Motor neuron (in vitro differentiated cells): ENCODE measurements at regions of chr5 and their contacts with region 1.

Region 1: GRCh38 chr5:154467655-154468354 is 10.2 kb downstream of the HAND1 start:
- ATAC-seq: peak; percentile 93 to 100 (median 98)
- H3K4me3 ChIP-seq: no peak overlapping the region
- H3K27ac ChIP-seq: no peak overlapping the region
- H3K4me1 ChIP-seq: no peaks in the 10 kb centered on the region

Region 2: GRCh38 chr5:154603978-154604679 is 136.3 kb after region 1 on chr5:
- in situ Hi-C with region 1: loop called in 6 of 9 experiments (anchors 5 to 25 kb)
- ATAC-seq: peak; percentile 47 to 69 (median 61)
- H3K4me3 ChIP-seq: no peak overlapping the region
- H3K27ac ChIP-seq: no peak overlapping the region
- H3K4me1 ChIP-seq: no peaks in the 10 kb centered on the region

Region 3: GRCh38 chr5:154610321-154611154 is 142.7 kb after region 1 on chr5:
- in situ Hi-C with region 1: loop called in 5 of 9 experiments (anchors 10 to 25 kb)
- ATAC-seq: peak; percentile 91 to 97 (median 96)
- H3K4me3 ChIP-seq: peak overlapping the region in 3 of 5 donors; percentile 2 to 25 (median 20)
- H3K27ac ChIP-seq: no peak overlapping the region
- H3K4me1 ChIP-seq: peaks cover 0 to 9% of the 10 kb centered on the region in 2 donors